ENCODE measurements at regions of chr6 and their contacts with region 1.

Region 1: GRCh38 chr6:150865406-150866146 is at the start of gene MTHFD1L:
- DNase-seq: peak; percentile 81
- H3K4me3 Mint-ChIP-seq: peak within 1 kb of the TSS; percentile 97
- H3K27ac Mint-ChIP-seq: peak within 1 kb of the TSS; percentile 85
- H3K4me1 Mint-ChIP-seq: peaks cover 41% of the 10 kb centered on the region
- H3K27me3 Mint-ChIP-seq: peaks cover 20% of the 10 kb centered on the region
- total RNA-seq, gene MTHFD1L: 51.6 to 54.6 TPM

Region 2: GRCh38 chr6:150765067-150765764 is 100.4 kb before region 1 on chr6:
- CTCF ChIA-PET with region 1: no interaction called
- POLR2A ChIA-PET with region 1: no interaction called
- DNase-seq: no peak
- H3K4me3 Mint-ChIP-seq: no peak overlapping the region
- H3K27ac Mint-ChIP-seq: no peak overlapping the region
- H3K4me1 Mint-ChIP-seq: no peaks in the 10 kb centered on the region
- H3K27me3 Mint-ChIP-seq: no peaks in the 10 kb centered on the region

Region 3: DNA sequence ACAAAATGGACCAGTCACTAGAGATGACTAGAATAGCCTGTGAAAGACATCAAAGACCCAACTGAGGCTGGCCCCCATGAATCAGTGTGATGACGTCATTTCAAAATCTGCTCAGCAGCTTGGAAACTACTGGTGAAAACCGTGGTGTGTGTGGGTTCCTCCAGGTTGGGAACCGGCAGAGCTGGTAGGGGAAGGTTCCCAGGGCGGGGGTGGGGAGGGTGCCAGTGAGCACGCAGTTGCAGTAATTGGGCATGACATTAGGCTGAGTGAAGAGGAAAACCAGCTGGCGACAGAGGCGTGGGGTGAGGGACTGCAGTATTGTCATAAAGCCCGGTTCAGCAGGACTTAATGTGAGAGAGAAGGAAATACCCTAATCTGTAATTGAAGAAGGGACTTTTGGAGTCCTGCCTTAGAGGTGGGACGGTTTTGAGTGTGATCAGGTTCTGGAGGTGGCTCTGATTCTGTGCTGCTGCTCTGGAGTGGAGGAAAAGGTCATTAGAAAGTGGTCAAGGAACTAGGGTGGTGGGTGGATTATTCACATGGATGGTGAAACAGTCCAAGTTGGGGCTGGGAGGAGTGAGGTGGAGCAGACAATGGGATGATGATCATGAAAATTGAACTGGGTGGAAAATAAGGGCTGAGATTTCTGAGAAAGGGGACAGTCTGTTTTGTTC is 52.1 kb before region 1 on chr6:
- CTCF ChIA-PET with region 1: interaction called, 18 read pairs
- POLR2A ChIA-PET with region 1: no interaction called
- DNase-seq: peak; percentile 21
- H3K4me3 Mint-ChIP-seq: no peak overlapping the region
- H3K27ac Mint-ChIP-seq: peak overlapping the region; percentile 70
- H3K4me1 Mint-ChIP-seq: peaks cover 23% of the 10 kb centered on the region
- H3K27me3 Mint-ChIP-seq: peaks cover 6% of the 10 kb centered on the region